BJ (cell line): ENCODE measurements at regions of chr7 and their contacts with region 1.

Region 1: GRCh38 chr7:12686894-12687717 is at the start of gene ARL4A:
- DNase-seq: peak; percentile 80
- H3K4me3 ChIP-seq: peak within 1 kb of the TSS; percentile 81
- H3K27me3 ChIP-seq: no peaks in the 10 kb centered on the region
- CTCF ChIP-seq: peak; percentile 40
- polyA plus RNA-seq, gene ARL4A: 3.3 and 6.8 TPM in 2 replicates

Region 2: GRCh38 chr7:12638851-12639467 is 48.1 kb before region 1 on chr7:
- CTCF ChIA-PET with region 1: interaction called, 11 read pairs
- POLR2A ChIA-PET with region 1: no interaction called
- DNase-seq: no peak
- H3K4me3 ChIP-seq: no peak overlapping the region
- H3K27me3 ChIP-seq: no peaks in the 10 kb centered on the region
- CTCF ChIP-seq: peak; percentile 46

Region 3: DNA sequence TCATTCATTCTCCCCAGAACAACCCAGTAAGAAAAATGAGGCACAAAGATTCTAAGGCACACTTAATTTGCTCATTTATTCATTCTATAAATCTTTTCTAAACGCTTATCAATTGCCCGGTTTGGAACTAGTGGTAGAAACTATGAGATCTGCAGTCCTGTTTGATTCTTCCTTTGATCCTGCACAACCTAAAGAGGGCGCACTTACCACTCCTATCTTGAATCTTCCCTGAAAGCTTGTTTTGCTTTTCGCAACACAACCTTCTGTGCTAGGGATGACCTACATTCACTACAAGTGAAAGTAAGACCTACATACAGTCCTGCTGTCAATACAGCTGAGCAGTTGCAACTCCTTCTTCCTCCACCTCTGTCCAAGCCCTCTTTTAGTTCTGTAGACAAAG is 12.3 kb before region 1 on chr7:
- CTCF ChIA-PET with region 1: interaction called, 20 read pairs
- POLR2A ChIA-PET with region 1: no interaction called
- DNase-seq: no peak
- H3K4me3 ChIP-seq: no peak overlapping the region
- H3K27me3 ChIP-seq: no peaks in the 10 kb centered on the region
- CTCF ChIP-seq: peak; percentile 53

Region 4: DNA sequence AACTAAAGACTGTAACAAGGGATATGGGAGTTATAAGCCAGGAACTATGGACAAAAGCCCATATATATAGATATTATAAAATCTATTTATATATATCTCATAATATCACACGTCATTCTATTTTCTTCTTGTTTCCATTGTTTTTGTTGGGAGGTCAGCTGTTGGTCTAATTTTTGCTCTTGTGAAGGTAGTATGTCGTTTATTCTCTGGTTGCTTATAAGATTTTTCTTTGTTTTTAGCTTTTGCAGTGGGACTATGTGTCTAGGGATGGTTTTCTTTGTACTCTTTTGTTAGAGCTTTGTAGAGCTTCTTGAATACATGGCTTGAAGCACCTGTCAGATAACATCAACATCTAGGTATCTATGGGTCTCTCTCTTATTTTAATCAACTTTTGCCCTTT is 14.3 kb after region 1 on chr7:
- CTCF ChIA-PET with region 1: interaction called, 10 read pairs
- POLR2A ChIA-PET with region 1: interaction called, 3 read pairs
- DNase-seq: no peak
- H3K4me3 ChIP-seq: no peak overlapping the region
- H3K27me3 ChIP-seq: no peaks in the 10 kb centered on the region
- CTCF ChIP-seq: no peak

Region 5: DNA sequence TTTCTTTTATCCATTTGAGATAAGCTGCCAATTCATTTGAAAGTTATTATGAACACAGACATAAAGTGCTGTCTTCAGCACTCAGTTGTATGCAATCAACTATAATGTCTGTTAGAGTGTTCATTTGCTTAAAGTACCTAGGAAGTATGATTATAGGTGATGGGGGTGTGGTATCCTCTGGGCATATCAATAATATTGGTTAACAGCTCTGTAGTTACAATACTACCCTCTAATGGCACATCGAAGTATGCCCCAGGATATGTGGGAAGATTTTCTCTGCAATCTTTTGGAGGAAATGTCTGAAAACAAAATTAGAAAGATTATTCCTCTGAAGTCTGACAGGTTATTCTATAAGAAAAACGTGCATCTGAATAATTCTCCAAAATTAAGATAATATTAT is 430.0 kb after region 1 on chr7:
- CTCF ChIA-PET with region 1: interaction called, 74 read pairs
- POLR2A ChIA-PET with region 1: no interaction called
- DNase-seq: no peak
- H3K4me3 ChIP-seq: no peak overlapping the region
- H3K27me3 ChIP-seq: no peaks in the 10 kb centered on the region
- CTCF ChIP-seq: peak; percentile 48

Region 6: DNA sequence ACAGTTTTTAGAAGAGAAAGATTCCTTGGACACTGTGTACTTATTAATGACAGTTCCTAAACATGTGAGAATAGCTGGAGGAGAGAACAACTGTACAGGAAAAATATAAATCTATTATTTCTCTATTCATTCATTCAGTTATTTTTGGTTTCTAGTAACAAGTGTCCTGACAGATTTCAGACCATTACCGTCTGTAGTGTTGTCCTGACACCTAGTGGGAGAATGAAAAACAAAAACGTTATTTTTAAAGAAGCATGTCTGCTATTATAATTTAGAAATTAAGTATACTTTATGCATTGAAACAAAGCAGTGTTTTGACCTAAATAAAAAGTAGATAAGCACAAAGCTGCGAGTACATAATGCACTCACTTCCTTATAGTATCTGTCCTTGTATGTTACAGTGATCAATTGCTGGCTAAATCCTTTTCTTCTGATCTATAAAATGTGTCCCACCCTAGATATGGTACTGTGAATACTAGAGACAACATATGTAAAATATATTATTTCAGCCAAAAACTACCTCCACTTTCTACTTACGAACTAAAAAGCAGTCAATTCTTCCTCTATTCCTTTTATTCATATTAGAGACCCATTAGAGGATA is 575.9 kb after region 1 on chr7:
- CTCF ChIA-PET with region 1: interaction called, 17 read pairs
- POLR2A ChIA-PET with region 1: no interaction called
- DNase-seq: no peak
- H3K4me3 ChIP-seq: no peak overlapping the region
- H3K27me3 ChIP-seq: no peaks in the 10 kb centered on the region
- CTCF ChIP-seq: peak; percentile 49